ENCODE measurements at regions of chr10 and their contacts with region 1.

Region 1: DNA sequence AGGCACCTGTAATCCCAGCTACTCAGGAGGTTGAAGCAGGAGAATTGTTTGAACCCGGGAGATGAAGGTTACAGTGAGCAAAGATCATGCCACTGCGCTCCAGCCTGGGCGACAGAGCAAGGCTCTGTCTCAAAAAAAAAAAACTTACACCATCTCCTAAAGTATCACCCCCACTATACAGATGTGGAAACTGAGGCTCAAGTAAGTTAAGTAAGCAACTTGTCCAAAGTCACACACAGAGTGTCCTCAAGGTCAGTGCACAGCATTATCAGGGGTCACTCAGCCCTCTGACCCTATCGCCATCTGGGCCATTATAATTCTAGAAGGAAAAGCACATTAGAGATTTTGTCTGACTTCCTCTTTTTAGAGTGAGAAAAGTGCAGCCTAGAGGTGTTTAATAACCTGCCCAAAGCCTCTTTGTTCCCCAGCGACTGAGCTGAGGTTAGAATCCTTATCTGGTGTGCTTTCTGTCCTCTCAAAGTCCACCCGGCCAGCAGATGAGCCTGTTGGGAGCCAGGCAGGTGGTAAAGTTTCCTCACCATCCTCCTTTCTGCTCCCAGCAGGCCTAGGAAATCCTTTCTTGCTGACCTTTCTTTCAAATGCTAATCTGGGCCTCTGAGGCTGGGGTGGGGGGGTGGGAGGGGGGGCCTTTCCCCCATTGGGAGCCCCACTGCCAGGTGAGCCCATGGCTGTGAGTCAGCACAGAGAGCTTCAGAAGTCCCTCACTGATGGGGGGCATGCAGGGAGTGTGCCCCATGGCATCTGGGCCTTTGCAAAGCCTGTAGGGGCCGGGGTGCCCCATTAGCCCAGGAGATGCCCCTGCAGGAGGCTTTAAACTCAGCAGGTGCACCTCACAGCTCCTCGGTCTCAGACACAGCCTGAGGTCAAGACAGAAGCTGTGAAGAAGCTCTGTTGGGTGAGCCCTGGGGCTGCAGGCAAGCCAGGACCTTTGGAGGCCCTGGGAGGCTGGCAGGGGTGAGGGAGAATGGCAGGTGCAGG is 12.0 kb upstream of the KCNMA1 start:
- DNase-seq: no peak
- ATAC-seq: no peak
- H3K4me3 ChIP-seq: no peak overlapping the region
- H3K27ac ChIP-seq: no peak overlapping the region
- H3K4me1 ChIP-seq: no peaks in the 10 kb centered on the region
- H3K27me3 ChIP-seq: no peaks in the 10 kb centered on the region
- CTCF ChIP-seq: no peak

Region 2: DNA sequence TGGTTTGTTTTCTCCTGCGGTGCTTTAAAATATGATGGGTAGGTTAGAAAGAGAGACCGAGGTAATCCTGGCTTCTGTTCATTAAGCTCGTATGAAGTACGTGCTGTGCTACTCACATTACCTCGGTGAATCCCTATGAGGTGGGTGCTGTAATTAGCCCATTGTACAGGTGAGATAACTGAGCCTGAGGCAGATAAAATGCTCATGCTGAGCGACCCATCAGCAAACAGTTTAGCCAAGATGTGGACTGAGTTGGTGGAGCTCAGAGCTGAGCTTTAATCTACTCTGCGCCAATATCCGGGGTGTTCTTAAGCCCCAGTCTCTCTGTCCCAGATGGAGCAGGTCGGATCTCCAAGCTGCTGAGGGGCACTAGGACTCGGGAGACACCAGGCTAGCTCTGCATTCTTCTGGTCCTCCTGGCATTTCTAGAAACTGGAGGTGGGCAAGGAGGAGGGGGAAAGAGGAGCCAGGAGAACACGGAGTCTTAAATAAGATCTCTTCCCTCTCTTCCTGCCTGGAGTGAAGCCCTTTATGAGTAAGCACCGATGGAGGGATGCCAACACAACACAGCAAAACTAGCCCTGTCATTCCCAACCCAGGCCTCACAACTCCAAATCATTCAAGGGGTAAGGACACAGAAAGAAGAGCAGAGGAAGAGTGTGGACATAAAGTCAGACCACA is 470.5 kb before region 1 on chr10:
- intact Hi-C with region 1: loop called (anchors 5 kb)
- DNase-seq: no peak
- ATAC-seq: no peak
- H3K4me3 ChIP-seq: no peak overlapping the region
- H3K27ac ChIP-seq: no peak overlapping the region
- H3K4me1 ChIP-seq: no peaks in the 10 kb centered on the region
- H3K27me3 ChIP-seq: no peaks in the 10 kb centered on the region
- CTCF ChIP-seq: no peak

Region 3: GRCh38 chr10:77592946-77593636 is 56.5 kb before region 1 on chr10:
- intact Hi-C with region 1: no loop called
- DNase-seq: no peak
- ATAC-seq: peak; percentile 90
- H3K4me3 ChIP-seq: no peak overlapping the region
- H3K27ac ChIP-seq: no peak overlapping the region
- H3K4me1 ChIP-seq: no peaks in the 10 kb centered on the region
- H3K27me3 ChIP-seq: no peaks in the 10 kb centered on the region
- CTCF ChIP-seq: no peak

Measured in upper lobe of right lung (tissue), 1 donor.